Psoas muscle (tissue), 8 donors: ENCODE measurements at regions of chr9 and their contacts with region 1.

Region 1: DNA sequence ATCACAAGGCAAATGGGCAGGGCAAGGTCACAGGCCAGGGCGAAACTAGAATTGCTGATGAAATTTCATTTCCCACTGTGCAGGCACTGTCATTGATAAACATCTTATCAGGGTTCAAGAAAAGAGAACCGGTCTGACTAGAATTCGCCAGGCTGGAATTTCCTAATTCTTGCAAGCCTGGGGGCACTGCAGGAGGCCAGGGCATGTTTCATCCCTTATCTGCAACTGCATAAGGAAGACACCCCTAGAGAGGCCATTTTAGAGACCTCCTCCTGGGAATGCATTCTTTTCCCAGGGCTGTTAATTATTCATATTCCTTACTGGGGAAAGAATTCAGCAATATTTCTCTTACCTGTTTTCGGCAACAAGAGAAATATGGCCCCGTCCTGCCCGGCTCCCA is 266.2 kb upstream of the CYLC2 start:
- DNase-seq: no peak
- ATAC-seq: no peak
- H3K4me3 ChIP-seq: no peak overlapping the region
- H3K27ac ChIP-seq: no peak overlapping the region
- H3K4me1 ChIP-seq: no peaks in the 10 kb centered on the region
- H3K27me3 ChIP-seq: no peaks in the 10 kb centered on the region
- CTCF ChIP-seq: no peak

Region 2: DNA sequence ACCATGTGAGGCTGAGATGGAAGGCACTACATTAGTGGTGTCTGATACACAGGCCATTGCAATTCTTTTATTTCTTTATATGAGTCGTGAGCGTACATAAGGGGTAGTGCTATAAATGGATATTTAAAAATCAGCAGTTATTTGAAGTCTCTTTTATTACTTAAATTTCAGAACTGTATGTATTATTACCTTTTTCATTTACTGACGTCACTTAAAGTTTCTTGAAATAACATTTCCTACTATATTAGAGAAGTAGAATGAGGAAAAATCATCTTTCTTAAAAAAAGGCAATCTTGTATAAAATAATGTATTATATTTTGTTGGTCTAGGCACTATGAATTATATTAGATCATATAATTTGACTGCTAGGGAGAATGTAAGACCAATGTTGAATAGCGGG is 14.8 kb before region 1 on chr9:
- intact Hi-C with region 1: no loop called
- DNase-seq: no peak
- ATAC-seq: no peak
- H3K4me3 ChIP-seq: no peak overlapping the region
- H3K27ac ChIP-seq: no peak overlapping the region
- H3K4me1 ChIP-seq: no peaks in the 10 kb centered on the region
- H3K27me3 ChIP-seq: no peaks in the 10 kb centered on the region
- CTCF ChIP-seq: no peak

Region 3: GRCh38 chr9:102740577-102740976 is 11.6 kb after region 1 on chr9:
- intact Hi-C with region 1: loop called in 1 of 2 experiments (anchors 2 kb)
- DNase-seq: no peak
- ATAC-seq: no peak
- H3K4me3 ChIP-seq: no peak overlapping the region
- H3K27ac ChIP-seq: no peak overlapping the region
- H3K4me1 ChIP-seq: no peaks in the 10 kb centered on the region
- H3K27me3 ChIP-seq: no peaks in the 10 kb centered on the region
- CTCF ChIP-seq: no peak